Gastrocnemius medialis (tissue), 4 donors: ENCODE measurements at regions of chr1 and their contacts with region 1.

Region 1: GRCh38 chr1:15810073-15810472 is 2.6 kb upstream of the UQCRHL start:
- DNase-seq: no peak
- ATAC-seq: peak; percentile 45 to 70
- H3K4me3 ChIP-seq: no peak overlapping the region
- H3K27ac ChIP-seq: no peak overlapping the region
- H3K4me1 ChIP-seq: no peaks in the 10 kb centered on the region
- H3K27me3 ChIP-seq: no peaks in the 10 kb centered on the region
- CTCF ChIP-seq: no peak
- POLR2A ChIP-seq: no peak

Region 2: GRCh38 chr1:15714406-15715136 is 95.5 kb before region 1 on chr1:
- in situ Hi-C with region 1: no loop called
- intact Hi-C with region 1: no loop called
- DNase-seq: peak; percentile 86 to 87
- ATAC-seq: peak; percentile 76 to 80
- H3K4me3 ChIP-seq: peak overlapping the region in 1 of 4 donors; percentile 2
- H3K27ac ChIP-seq: peak overlapping the region; percentile 93 to 96 (median 96)
- H3K4me1 ChIP-seq: peaks cover 83 to 95% of the 10 kb centered on the region in 2 donors
- H3K27me3 ChIP-seq: no peaks in the 10 kb centered on the region
- CTCF ChIP-seq: no peak
- POLR2A ChIP-seq: peak; percentile 43 to 74

Region 3: DNA sequence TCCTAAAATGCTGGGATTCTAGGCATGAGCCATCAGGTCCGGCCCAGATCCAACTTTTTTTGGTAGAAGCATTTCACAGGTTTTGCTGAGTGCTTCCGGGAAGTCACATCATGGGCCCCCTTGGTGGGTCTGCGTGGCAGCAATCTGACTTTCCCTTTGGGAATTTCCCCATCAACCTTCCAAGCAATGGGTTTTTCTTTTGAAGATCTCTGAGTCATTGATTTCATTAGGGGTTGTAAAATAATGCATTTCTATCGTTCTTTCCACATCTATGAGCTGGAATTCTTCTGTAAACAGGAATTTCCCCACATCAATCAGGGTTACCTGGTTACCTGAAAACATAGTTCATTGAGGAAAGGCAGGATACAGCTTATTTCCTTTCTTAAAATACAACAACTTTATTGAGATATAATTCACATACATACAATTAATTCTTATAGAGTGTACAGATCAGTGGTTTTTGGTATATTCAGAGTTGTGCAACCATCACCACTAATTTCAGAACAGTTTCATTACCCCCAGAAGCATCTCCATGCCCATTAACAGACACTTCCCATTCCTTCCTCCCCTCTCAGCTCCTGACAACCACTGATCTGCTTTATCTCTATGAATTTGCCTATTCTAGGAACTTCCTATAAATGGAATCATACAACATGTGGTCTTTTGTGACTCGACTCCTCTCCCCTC is 175.7 kb after region 1 on chr1:
- in situ Hi-C with region 1: loop called in 3 of 4 experiments (anchors 10 to 25 kb)
- intact Hi-C with region 1: loop called (anchors 5 kb)
- DNase-seq: no peak
- ATAC-seq: no peak
- H3K4me3 ChIP-seq: no peak overlapping the region
- H3K27ac ChIP-seq: no peak overlapping the region
- H3K4me1 ChIP-seq: no peaks in the 10 kb centered on the region
- H3K27me3 ChIP-seq: no peaks in the 10 kb centered on the region
- CTCF ChIP-seq: no peak
- POLR2A ChIP-seq: no peak

Region 4: DNA sequence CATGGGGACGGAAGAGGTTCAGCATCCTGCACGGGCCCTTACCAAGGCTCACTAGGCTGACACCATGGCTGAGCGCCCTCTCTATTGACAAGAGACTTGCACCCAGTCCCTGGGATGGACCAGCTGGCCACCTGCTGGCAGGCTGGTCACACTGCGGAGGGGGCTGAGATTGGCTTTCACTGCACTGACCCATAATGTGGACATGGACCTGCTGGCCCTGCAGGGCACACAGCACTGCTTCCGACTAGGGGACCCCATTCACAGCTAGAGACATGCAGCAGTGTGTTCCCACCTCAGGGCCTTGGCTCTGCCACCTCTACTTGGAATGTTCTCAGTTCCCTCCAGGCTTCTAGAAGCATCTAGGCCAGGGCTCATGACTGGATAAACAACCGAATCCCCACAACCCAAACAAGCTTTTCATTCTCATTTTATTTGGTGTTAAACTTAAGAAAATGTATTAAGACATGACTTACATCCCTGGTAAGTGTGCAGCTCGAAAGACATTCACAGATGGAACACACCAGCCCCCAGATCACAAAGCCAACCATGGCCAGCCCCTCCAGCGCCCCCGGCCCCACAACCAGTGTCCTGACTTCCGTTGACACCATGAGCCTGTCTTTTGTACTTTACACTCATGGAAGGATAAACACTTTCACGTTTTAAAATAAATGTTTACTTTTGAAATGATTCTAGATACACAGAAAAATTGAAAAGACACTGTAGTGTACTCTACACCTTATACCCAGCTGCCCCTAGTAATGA is 184.7 kb after region 1 on chr1:
- in situ Hi-C with region 1: loop called in 3 of 4 experiments (anchors 10 to 25 kb)
- intact Hi-C with region 1: loop called (anchors 5 kb)
- DNase-seq: peak in 1 of 2 donors; percentile 37
- ATAC-seq: peak; percentile 42 to 54
- H3K4me3 ChIP-seq: no peak overlapping the region
- H3K27ac ChIP-seq: no peak overlapping the region
- H3K4me1 ChIP-seq: no peaks in the 10 kb centered on the region
- H3K27me3 ChIP-seq: no peaks in the 10 kb centered on the region
- CTCF ChIP-seq: peak; percentile 58 to 93 (median 80)
- POLR2A ChIP-seq: no peak